Naive thymus-derived CD4-positive, alpha-beta T cell (primary cell): ENCODE measurements at regions of chr11 and their contacts with region 1.

Region 1: GRCh38 chr11:82718307-82718706 is 15.4 kb downstream of the FAM181B start:
- DNase-seq: peak in 5 of 9 donors; percentile 22 to 53 (median 34)
- ATAC-seq: peak; percentile 61
- H3K4me3 ChIP-seq: no peak overlapping the region
- H3K4me3 Mint-ChIP-seq: no peak overlapping the region
- H3K27ac ChIP-seq: no peak overlapping the region
- H3K27ac Mint-ChIP-seq: peak overlapping the region in 1 of 9 donors; percentile 87
- H3K4me1 ChIP-seq: no peaks in the 10 kb centered on the region
- H3K4me1 Mint-ChIP-seq: peaks cover 0 to 6% (median 4%) of the 10 kb centered on the region in 7 donors
- H3K27me3 ChIP-seq: no peaks in the 10 kb centered on the region
- H3K27me3 Mint-ChIP-seq: peaks cover 0 to 5% (median 0%) of the 10 kb centered on the region in 5 donors

Region 2: DNA sequence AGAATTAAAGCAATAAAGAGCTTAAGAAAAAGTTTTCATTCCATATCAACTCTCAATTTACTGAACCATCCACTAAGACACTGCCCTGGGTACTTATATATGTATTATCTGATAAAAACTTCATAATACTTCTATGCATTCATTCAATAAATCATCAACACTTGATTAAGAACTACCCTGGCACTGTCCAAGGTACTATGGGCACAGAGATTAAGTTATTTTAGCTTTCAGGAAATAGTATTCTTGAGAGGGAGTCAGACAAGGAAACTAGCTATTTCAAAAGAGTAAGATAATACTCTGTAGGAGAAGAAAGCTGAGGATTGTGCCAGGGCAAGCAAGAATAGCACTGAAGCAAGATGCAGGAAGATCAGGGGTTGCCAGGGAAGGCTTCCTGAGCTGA is 625.4 kb before region 1 on chr11:
- CTCF ChIA-PET with region 1: no interaction called
- POLR2A ChIA-PET with region 1: no interaction called
- intact Hi-C with region 1: no loop called
- DNase-seq: no peak
- ATAC-seq: no peak
- H3K4me3 ChIP-seq: no peak overlapping the region
- H3K4me3 Mint-ChIP-seq: no peak overlapping the region
- H3K27ac ChIP-seq: no peak overlapping the region
- H3K27ac Mint-ChIP-seq: no peak overlapping the region
- H3K4me1 ChIP-seq: no peaks in the 10 kb centered on the region
- H3K4me1 Mint-ChIP-seq: peaks cover 0 to 2% (median 0%) of the 10 kb centered on the region in 7 donors
- H3K27me3 ChIP-seq: no peaks in the 10 kb centered on the region
- H3K27me3 Mint-ChIP-seq: peaks cover 0 to 6% (median 0%) of the 10 kb centered on the region in 5 donors

Region 3: GRCh38 chr11:82682003-82682751 is 36.1 kb before region 1 on chr11:
- CTCF ChIA-PET with region 1: no interaction called
- POLR2A ChIA-PET with region 1: no interaction called
- intact Hi-C with region 1: no loop called
- DNase-seq: peak in 7 of 9 donors; percentile 24 to 55 (median 38)
- ATAC-seq: peak; percentile 72
- H3K4me3 ChIP-seq: no peak overlapping the region
- H3K4me3 Mint-ChIP-seq: peak overlapping the region in 1 of 10 donors; percentile 5
- H3K27ac ChIP-seq: no peak overlapping the region
- H3K27ac Mint-ChIP-seq: peak overlapping the region in 2 of 9 donors; percentile 2 to 19
- H3K4me1 ChIP-seq: no peaks in the 10 kb centered on the region
- H3K4me1 Mint-ChIP-seq: peaks cover 0 to 5% (median 0%) of the 10 kb centered on the region in 7 donors
- H3K27me3 ChIP-seq: no peaks in the 10 kb centered on the region
- H3K27me3 Mint-ChIP-seq: peaks cover 8 to 20% (median 17%) of the 10 kb centered on the region in 5 donors

Region 4: DNA sequence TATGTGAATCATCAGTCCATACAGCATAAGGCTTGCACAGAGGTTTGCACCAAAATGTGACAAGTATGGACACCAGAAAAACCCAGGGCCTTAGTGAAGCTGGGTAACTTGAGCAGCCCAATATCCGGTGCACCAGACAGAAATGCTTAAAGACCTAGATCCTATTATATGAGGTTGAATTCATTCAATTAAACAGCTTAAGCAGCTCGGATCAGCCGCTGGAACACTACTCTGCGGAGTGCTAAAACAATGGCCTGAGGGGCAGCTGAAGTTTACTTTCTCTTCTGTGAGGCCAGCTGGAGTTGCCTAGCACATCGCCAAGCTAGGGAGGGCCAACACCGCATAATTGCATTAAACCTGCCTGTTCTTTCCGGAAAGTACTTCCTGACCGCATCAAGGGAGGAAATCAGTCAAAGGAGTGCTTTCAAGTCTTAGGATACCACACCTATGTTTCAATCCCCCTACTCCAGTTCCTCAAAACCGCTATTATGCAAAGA is 32.4 kb after region 1 on chr11:
- CTCF ChIA-PET with region 1: no interaction called
- POLR2A ChIA-PET with region 1: interaction called, 3 read pairs
- intact Hi-C with region 1: loop called in 1 of 2 experiments (anchors 2 kb)
- DNase-seq: peak in 7 of 9 donors; percentile 41 to 66 (median 62)
- ATAC-seq: peak; percentile 84
- H3K4me3 ChIP-seq: peak overlapping the region; percentile 21
- H3K4me3 Mint-ChIP-seq: peak overlapping the region; percentile 71 to 87 (median 82)
- H3K27ac ChIP-seq: peak overlapping the region; percentile 11
- H3K27ac Mint-ChIP-seq: peak overlapping the region; percentile 22 to 91 (median 60)
- H3K4me1 ChIP-seq: peaks cover 2 to 27% of the 10 kb centered on the region in 2 donors
- H3K4me1 Mint-ChIP-seq: peaks cover 15 to 47% (median 38%) of the 10 kb centered on the region in 7 donors
- H3K27me3 ChIP-seq: no peaks in the 10 kb centered on the region
- H3K27me3 Mint-ChIP-seq: peaks cover 0 to 38% (median 0%) of the 10 kb centered on the region in 5 donors

Region 5: DNA sequence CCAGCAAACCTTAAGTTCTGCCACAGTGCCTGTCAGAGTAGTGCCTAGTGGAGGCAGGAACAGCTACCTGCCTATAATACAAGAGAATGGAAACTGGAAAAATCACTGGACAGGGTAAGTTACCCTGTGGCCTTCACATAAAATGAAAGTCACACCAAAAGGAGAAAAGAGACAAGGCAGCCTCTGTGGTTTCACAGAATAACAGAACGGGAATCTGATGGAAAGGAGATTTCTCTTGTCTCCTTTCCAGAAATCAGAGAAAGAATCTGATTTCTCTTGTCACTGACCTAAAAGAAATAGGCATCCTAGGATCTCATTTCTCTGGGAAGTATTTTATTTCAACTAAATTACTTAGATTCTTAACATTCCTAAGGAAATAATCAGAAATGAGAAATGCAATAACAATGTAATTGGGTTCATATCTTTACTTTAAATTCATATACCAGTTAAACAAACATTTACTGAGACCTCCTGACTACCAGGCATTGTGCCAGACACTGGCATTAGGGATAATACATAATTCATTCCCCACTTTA is 140.3 kb after region 1 on chr11:
- CTCF ChIA-PET with region 1: interaction called, 13 read pairs
- POLR2A ChIA-PET with region 1: no interaction called
- intact Hi-C with region 1: no loop called
- DNase-seq: no peak
- ATAC-seq: no peak
- H3K4me3 ChIP-seq: no peak overlapping the region
- H3K4me3 Mint-ChIP-seq: no peak overlapping the region
- H3K27ac ChIP-seq: no peak overlapping the region
- H3K27ac Mint-ChIP-seq: no peak overlapping the region
- H3K4me1 ChIP-seq: no peaks in the 10 kb centered on the region
- H3K4me1 Mint-ChIP-seq: peaks cover 0 to 7% (median 4%) of the 10 kb centered on the region in 7 donors
- H3K27me3 ChIP-seq: no peaks in the 10 kb centered on the region
- H3K27me3 Mint-ChIP-seq: peaks cover 0 to 4% (median 0%) of the 10 kb centered on the region in 5 donors

Region 6: DNA sequence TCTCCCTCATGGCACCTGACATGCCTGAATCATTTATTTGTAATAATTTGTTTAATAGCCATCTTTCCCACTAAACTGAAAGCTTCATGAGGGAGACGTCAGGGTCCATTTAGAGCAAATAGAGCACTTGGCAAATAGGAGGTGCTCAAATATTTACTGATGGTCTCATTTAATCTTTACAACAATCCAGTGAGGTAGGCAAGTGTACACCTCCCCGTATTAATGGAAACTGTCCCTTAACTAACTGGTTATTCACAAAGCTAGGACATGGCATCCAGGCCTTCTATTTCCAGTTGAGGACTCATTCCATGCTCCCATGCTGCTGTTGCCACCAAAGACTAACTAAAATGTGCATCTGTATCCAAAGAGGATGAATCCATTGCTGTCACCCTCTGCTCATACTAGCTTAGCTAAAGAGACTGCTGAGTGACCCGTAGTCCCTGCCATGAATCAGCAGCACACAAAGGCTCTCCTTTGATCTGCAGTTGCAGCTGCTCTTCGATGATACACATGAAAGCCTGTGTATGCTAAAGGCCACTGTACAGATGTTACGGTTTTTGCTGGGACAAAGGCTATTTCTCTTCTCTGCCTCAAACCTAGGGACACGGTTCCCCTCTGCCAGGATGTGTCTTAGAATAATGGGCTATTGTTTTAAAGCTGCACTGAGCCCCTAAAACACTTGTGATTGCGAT is 270.8 kb after region 1 on chr11:
- CTCF ChIA-PET with region 1: interaction called, 3 read pairs
- POLR2A ChIA-PET with region 1: no interaction called
- intact Hi-C with region 1: loop called in 1 of 2 experiments (anchors 1 kb)
- DNase-seq: no peak
- ATAC-seq: no peak
- H3K4me3 ChIP-seq: no peak overlapping the region
- H3K4me3 Mint-ChIP-seq: peak overlapping the region in 1 of 10 donors; percentile 13
- H3K27ac ChIP-seq: no peak overlapping the region
- H3K27ac Mint-ChIP-seq: peak overlapping the region in 4 of 9 donors; percentile 22 to 69 (median 32)
- H3K4me1 ChIP-seq: peaks cover 0 to 4% of the 10 kb centered on the region in 2 donors
- H3K4me1 Mint-ChIP-seq: peaks cover 1 to 24% (median 15%) of the 10 kb centered on the region in 7 donors
- H3K27me3 ChIP-seq: no peaks in the 10 kb centered on the region
- H3K27me3 Mint-ChIP-seq: no peaks in the 10 kb centered on the region

Region 7: DNA sequence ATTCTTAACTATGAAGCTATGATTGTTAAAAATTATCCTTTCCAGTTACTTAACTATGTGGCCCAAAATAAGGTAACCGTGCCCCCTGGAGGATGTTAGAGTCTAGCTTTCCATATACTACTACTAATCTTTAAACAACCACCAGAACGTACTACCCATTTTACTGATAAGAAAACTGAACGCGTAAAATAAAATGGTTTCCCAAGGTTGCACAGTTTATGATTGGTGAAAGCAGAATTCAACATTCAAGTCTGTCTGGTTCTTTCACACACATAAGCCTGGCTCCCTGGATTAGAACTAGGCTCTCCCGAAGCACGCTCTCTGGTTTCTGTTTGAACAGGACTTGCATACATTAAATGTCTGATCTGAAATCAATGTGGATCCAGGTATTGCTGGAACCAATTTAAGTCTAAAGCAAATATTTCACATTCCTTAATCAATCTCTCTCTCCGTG is 1005.7 kb after region 1 on chr11:
- CTCF ChIA-PET with region 1: no interaction called
- POLR2A ChIA-PET with region 1: no interaction called
- intact Hi-C with region 1: loop called (anchors 1 to 5 kb)
- DNase-seq: peak in 3 of 9 donors; percentile 1 to 8 (median 8)
- ATAC-seq: peak; percentile 20
- H3K4me3 ChIP-seq: no peak overlapping the region
- H3K4me3 Mint-ChIP-seq: peak overlapping the region; percentile 22 to 91 (median 56)
- H3K27ac ChIP-seq: no peak overlapping the region
- H3K27ac Mint-ChIP-seq: peak overlapping the region in 1 of 9 donors; percentile 5
- H3K4me1 ChIP-seq: no peaks in the 10 kb centered on the region
- H3K4me1 Mint-ChIP-seq: peaks cover 0 to 12% (median 7%) of the 10 kb centered on the region in 7 donors
- H3K27me3 ChIP-seq: no peaks in the 10 kb centered on the region
- H3K27me3 Mint-ChIP-seq: peaks cover 5 to 35% (median 12%) of the 10 kb centered on the region in 5 donors